Heart right ventricle (tissue), 16 donors: ENCODE measurements at regions of chr16 and their contacts with region 1.

Region 1: GRCh38 chr16:96935-97381 is 18.9 kb downstream of the MPG start:
- DNase-seq: peak; percentile 87 to 90
- ATAC-seq: peak; percentile 80 to 92 (median 88)
- H3K4me3 ChIP-seq: no peak overlapping the region
- H3K27ac ChIP-seq: no peak overlapping the region
- H3K4me1 ChIP-seq: peaks cover 9 to 41% (median 19%) of the 10 kb centered on the region in 9 donors
- H3K27me3 ChIP-seq: no peaks in the 10 kb centered on the region
- CTCF ChIP-seq: peak; percentile 97 to 99 (median 98)

Region 2: GRCh38 chr16:65671-66137 is 31.3 kb before region 1 on chr16:
- intact Hi-C with region 1: loop called (anchors 1 to 2 kb)
- DNase-seq: peak; percentile 78 to 87
- ATAC-seq: peak; percentile 48 to 84 (median 72)
- H3K4me3 ChIP-seq: no peak overlapping the region
- H3K27ac ChIP-seq: peak overlapping the region in 1 of 10 donors; percentile 19
- H3K4me1 ChIP-seq: peaks cover 29 to 58% (median 50%) of the 10 kb centered on the region in 9 donors
- H3K27me3 ChIP-seq: peaks cover 0 to 7% (median 0%) of the 10 kb centered on the region in 7 donors
- CTCF ChIP-seq: peak; percentile 90 to 98 (median 97)